Activated CD4-positive, alpha-beta T cell treated with anti-CD3 and anti-CD28 coated beads, Interleukin-2, amount 10 ng/mL, durations not matched to agents 24 days and 14 days (primary cell): ENCODE measurements at regions of chr9 and their contacts with region 1.

Region 1: DNA sequence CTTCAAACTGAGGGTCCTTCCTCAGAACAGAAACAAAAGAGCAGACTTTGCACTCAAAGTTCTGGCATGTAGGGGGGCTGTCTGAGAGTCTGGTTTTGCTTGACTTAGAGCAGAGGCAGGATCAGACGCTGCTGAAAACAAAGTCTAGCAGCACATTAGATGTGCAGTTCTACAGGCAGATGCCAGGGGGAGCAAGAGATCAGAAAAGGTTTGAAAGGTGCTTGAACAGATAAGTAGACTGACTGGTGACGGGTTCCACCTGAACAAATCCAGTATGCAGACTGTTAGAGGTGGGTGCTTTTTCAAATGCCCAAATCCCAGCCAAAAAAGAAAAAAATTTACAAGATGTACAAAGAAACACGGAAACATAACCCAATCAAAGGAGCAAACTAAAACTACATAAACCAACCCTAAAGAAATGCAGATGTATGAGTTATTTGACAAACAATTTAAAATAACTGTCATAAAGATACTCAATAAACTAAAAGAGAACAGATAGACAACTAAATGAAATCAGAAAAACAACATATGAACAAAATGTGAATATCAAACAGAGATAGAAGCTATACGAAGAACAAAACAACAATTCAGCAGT is 194.7 kb upstream of the FREM1 start:
- DNase-seq: peak; percentile 84
- H3K4me3 Mint-ChIP-seq: no peak overlapping the region
- H3K27ac Mint-ChIP-seq: no peak overlapping the region
- H3K4me1 Mint-ChIP-seq: no peaks in the 10 kb centered on the region
- H3K27me3 Mint-ChIP-seq: peaks cover 11% of the 10 kb centered on the region

Region 2: DNA sequence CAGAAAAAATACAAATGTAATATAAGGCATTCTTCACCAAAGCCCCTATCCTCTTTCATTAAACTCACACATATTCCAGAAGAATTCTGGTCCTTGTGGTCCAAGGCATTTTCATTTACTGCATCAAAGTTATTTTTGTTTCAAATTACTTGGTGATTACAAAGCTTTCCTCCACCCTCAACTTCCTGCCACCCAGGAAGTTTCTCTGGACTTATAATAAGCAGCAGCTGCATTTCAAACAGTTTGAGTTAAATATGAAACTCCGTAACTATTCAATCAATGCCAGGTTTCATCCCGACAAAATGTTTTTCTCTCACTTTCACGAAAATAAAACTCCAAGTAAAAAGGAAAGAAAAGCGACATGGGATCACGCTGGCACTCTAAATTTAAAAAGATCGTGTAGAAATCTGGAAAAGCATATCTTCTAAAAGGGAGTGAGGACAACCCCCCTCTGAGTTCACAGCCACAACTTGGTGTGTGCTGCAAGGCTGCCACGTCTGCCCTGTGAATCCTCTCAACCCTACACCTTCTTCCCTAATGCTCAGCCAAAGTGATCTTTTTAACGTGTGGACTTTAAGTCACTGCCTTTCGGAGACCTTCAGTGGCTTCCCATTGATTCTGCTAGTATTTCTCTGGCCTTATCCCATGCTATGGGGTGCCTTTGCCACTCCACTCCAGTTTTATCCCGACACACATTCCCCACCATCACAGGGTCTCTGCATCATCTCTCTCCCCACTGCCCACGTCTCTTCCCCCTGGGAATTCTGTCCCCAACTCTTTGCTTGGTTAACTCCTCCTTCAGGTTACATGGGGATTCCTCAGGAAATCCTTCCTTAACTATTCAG is 291.4 kb before region 1 on chr9:
- intact Hi-C with region 1: no loop called
- DNase-seq: no peak
- H3K4me3 Mint-ChIP-seq: no peak overlapping the region
- H3K27ac Mint-ChIP-seq: no peak overlapping the region
- H3K4me1 Mint-ChIP-seq: no peaks in the 10 kb centered on the region
- H3K27me3 Mint-ChIP-seq: peaks cover 5% of the 10 kb centered on the region

Region 3: GRCh38 chr9:15142878-15143534 is 38.1 kb after region 1 on chr9:
- intact Hi-C with region 1: loop called (anchors 2 kb)
- DNase-seq: peak; percentile 72
- H3K4me3 Mint-ChIP-seq: no peak overlapping the region
- H3K27ac Mint-ChIP-seq: no peak overlapping the region
- H3K4me1 Mint-ChIP-seq: peaks cover 3% of the 10 kb centered on the region
- H3K27me3 Mint-ChIP-seq: peaks cover 9% of the 10 kb centered on the region

Region 4: DNA sequence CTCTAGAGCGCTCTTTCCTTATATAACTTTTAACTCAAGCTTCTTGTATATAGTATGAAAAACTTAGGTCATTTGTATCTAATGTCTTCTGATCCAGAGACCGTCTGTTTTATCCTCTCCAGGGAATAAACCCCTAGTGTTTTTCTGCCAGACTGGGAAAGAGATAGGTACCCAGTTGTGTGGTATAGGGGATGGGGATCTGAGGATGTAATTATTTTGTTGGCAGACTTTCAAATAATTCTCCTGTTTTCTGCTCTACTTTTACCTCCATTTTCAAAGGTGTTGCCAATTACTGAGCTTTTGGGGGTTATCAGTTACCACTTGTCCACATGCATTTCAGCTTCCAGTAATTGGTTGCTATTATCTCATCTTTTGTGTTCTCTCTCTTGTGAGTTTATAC is 465.8 kb after region 1 on chr9:
- intact Hi-C with region 1: no loop called
- DNase-seq: no peak
- H3K4me3 Mint-ChIP-seq: no peak overlapping the region
- H3K27ac Mint-ChIP-seq: no peak overlapping the region
- H3K4me1 Mint-ChIP-seq: no peaks in the 10 kb centered on the region
- H3K27me3 Mint-ChIP-seq: no peaks in the 10 kb centered on the region